ENCODE measurements at regions of chr3 and their contacts with region 1.

Region 1: DNA sequence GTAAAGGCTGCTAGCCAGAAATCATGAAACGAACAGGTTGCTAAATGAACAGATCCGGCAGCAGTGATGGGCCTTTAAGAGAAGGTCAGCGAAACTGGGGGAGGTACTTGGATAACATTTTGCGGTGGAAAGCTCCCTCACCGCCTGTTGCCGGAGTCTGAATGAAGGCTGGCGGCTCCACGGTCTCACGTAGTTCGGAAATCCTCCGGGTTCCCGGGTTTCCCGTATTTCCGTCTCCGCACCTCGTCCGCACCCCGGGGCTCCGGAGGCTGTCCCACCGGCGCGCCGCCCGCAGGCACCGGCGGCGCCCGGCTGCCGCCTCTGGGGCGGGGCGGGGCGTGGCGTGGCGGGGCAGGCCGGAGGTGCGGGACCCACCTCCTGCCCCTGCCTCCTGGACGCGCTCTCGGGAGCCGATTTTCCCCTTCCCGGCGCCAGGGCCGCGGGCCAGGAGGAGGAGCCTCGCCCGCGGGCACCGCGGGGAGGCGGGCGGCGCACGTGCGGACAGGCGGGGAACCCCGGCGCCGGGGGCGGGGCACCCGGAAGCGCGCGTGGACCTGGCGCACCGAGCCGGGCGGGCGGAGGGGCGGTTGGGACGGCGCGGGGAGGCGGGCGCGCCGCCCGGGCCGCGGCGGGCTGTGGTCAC is at the start of gene ZDHHC23:
- DNase-seq: peak; percentile 85
- total RNA-seq, gene ZDHHC23: 0.93 to 2.3 TPM

Region 2: GRCh38 chr3:112605285-112605684 is 1342.2 kb before region 1 on chr3:
- intact Hi-C with region 1: loop called in 1 of 2 experiments (anchors 5 kb)
- DNase-seq: no peak